ENCODE measurements at regions of chr15 and their contacts with region 1.

Region 1: DNA sequence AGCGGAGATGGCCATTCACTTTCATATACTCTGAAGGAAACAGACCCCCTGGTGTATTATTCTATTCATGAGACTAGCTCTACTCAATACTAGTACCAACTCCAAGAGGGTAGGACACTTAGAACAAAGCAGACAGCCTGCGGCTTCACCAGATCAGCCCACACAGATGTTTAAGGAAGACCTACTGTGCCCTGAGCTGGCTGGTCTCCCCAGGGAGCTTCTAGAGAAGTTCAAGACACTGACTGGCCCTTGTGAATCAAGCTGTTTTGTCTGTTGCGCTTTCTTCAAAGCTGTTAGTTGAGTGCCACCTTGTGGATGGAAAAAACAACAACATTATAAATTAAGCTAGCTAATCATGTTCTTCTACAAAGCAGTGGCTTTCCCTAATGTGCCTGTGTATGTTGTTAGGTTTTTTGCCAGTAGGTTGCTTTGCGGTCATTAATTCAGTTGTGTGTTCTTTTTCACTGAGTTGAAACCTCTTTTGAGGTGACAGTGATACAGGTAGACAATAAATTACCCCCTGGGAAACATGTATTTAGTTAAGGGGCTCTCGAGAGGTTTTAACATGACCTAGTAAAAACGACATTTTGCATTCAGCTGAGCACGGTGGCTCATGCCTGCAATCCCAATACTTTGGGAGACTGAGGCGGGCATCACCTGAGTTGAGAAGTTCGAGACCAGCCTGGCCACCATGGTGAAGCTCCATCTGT is 64.2 kb upstream of the MYZAP start:
- DNase-seq: no peak
- H3K4me3 ChIP-seq: no peak overlapping the region
- H3K27ac ChIP-seq: peak overlapping the region in 1 of 2 donors; percentile 19
- H3K4me1 ChIP-seq: no peaks in the 10 kb centered on the region
- H3K27me3 ChIP-seq: no peaks in the 10 kb centered on the region
- CTCF ChIP-seq: peak; percentile 52 to 84 (median 81)
- POLR2A ChIP-seq: no peak

Region 2: GRCh38 chr15:57340682-57341259 is 186.8 kb before region 1 on chr15:
- intact Hi-C with region 1: loop called (anchors 10 kb)
- DNase-seq: no peak
- H3K4me3 ChIP-seq: no peak overlapping the region
- H3K27ac ChIP-seq: no peak overlapping the region
- H3K4me1 ChIP-seq: no peaks in the 10 kb centered on the region
- H3K27me3 ChIP-seq: no peaks in the 10 kb centered on the region
- CTCF ChIP-seq: peak; percentile 69 to 90 (median 88)
- POLR2A ChIP-seq: no peak

Region 3: GRCh38 chr15:57476533-57476975 is 51.0 kb before region 1 on chr15:
- intact Hi-C with region 1: no loop called
- DNase-seq: peak in 1 of 2 donors; percentile 33
- H3K4me3 ChIP-seq: no peak overlapping the region
- H3K27ac ChIP-seq: peak overlapping the region; percentile 65 to 79
- H3K4me1 ChIP-seq: no peaks in the 10 kb centered on the region
- H3K27me3 ChIP-seq: no peaks in the 10 kb centered on the region
- CTCF ChIP-seq: no peak
- POLR2A ChIP-seq: no peak

Region 4: GRCh38 chr15:57551717-57552677 is 24.5 kb after region 1 on chr15:
- intact Hi-C with region 1: no loop called
- DNase-seq: peak in 1 of 2 donors; percentile 76
- H3K4me3 ChIP-seq: no peak overlapping the region
- H3K27ac ChIP-seq: peak overlapping the region; percentile 83 to 87
- H3K4me1 ChIP-seq: peaks cover 0 to 14% of the 10 kb centered on the region in 2 donors
- H3K27me3 ChIP-seq: no peaks in the 10 kb centered on the region
- CTCF ChIP-seq: no peak
- POLR2A ChIP-seq: no peak

Region 5: DNA sequence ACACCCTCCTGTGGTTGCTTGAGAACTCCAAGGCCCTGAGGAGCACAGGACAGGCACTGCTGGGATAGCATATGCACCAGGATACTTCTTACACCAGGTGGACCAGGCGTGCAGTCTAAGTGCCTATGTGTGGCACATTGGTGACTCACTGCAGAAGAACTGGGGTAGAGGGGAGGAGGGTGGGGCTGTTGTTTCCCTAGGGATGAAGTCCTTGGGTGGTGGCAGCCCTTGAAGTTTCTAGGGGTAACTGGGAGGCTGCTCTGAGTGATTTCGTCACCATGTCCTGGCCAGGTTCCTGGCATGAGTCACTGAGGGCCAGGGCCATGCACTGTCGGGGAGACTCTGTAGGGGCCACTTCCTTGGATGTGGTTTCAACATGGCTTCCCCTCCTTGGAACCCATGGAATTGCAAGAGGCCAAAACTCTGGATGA is 80.0 kb after region 1 on chr15:
- intact Hi-C with region 1: no loop called
- DNase-seq: no peak
- H3K4me3 ChIP-seq: no peak overlapping the region
- H3K27ac ChIP-seq: peak overlapping the region in 1 of 2 donors; percentile 50
- H3K4me1 ChIP-seq: peaks cover 3 to 10% of the 10 kb centered on the region in 2 donors
- H3K27me3 ChIP-seq: no peaks in the 10 kb centered on the region
- CTCF ChIP-seq: no peak
- POLR2A ChIP-seq: no peak

Measured in breast epithelium (tissue), 4 donors.